Dorsolateral prefrontal cortex (tissue), 120 donors: ENCODE measurements at regions of chr3 and their contacts with region 1.

Region 1: GRCh38 chr3:195522254-195523023 is 20.7 kb downstream of the PPP1R2 start:
- DNase-seq: no peak
- H3K4me3 ChIP-seq: peak overlapping the region in 39 of 59 donors; percentile 3 to 48 (median 24)
- H3K27ac ChIP-seq: no peak overlapping the region
- H3K27me3 ChIP-seq: no peaks in the 10 kb centered on the region
- CTCF ChIP-seq: peak; percentile 73 to 99 (median 89)

Region 2: DNA sequence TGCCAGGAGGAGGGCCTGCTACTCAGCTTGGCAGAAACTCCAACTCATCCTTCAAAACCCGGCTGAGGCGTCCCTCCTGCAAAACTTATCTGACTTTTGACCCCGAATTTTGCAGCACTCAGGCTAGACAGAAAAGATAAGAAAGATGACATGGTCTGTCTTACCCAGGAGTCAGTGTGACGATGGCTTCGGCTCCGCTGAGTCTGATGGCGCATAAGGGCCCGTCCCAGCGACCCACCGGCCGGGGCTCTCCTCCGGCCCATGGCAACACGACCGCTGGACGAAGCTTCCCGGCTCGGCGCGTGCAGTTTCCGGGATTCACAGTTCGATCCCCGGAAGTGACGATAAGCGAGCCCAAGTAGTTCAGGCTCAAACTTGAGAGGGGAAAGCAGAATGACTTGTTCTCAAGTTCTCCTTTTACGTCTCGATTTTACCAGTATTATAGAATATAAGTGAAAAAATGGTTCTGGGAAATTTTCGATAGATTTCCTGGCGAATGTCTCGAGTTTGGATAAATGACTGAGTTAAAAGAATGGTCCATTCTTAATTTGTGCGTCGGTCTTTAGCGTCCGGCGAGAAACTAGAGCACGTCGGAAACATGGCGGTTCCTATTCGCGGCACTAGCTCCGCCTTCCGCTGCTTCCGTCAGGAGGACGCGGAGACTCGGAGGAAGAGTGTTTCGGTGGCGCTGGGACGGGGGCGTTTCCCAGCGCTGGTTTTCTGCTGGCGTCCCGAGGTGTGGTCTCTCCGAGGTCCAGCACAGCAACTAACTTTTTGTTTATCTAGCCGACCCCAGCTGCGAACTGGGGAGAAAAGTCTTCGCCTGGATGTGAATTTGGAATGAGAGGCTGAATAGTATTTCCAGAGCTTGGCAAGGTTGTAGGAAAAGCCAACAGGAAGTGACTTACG is 850.3 kb before region 1 on chr3 and contains the start of gene LSG1:
- intact Hi-C with region 1: loop called in 1 of 2 experiments (anchors 10 kb)
- DNase-seq: peak; percentile 84 to 91 (median 88)
- H3K4me3 ChIP-seq: peak within 1 kb of the TSS; percentile 63 to 100 (median 91)
- H3K27ac ChIP-seq: peak within 1 kb of the TSS; percentile 75 to 99 (median 93)
- H3K27me3 ChIP-seq: peaks cover 0 to 8% (median 0%) of the 10 kb centered on the region in 45 donors
- CTCF ChIP-seq: peak in 36 of 56 donors; percentile 2 to 62 (median 37)
- total RNA-seq, gene LSG1: 19.3 to 41.3 (median 27.1) TPM

Region 3: DNA sequence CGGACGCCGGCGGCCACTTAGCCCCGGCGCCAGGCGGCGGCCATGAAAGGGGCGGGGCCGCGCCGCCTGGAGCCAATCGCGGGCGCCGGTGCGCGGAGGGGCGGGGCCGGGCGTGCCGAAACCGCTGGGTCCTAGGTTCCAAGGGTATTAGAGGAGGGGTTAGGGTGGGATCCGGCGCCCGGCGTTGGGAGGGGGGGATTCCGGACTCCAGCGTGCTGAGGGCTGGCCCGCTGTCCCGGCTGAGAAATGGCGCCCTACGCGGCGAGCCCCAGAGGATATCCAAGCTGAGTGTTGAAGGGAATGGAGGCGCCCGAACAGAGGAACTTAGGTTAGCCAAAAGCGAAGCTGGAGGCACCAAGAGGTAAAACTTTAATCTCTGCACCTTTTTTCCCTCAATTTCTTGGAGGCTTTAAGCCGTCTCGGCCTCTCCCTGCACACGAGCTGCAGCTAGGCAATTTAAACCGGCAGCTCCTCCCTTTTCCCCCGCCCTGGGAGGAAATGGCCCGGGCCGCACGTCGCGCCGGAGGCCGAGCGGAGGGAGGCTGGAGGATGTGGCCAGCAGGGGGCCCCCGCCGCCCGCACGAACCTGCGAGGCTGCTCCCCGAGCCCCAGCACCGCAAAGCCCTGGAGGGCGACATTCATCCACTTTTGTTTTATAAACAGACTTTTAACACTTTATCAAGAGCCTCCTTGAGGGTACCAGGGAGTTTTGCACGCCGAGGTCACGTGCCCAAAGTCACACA is 251.2 kb before region 1 on chr3 and contains the start of gene XXYLT1:
- intact Hi-C with region 1: loop called (anchors 1 kb)
- DNase-seq: peak; percentile 81 to 94 (median 84)
- H3K4me3 ChIP-seq: peak within 1 kb of the TSS; percentile 72 to 98 (median 89)
- H3K27ac ChIP-seq: peak within 1 kb of the TSS; percentile 53 to 97 (median 91)
- H3K27me3 ChIP-seq: no peaks in the 10 kb centered on the region
- CTCF ChIP-seq: peak; percentile 81 to 99 (median 96)
- total RNA-seq, gene XXYLT1: 7.2 to 19.3 (median 13.0) TPM

Region 4: GRCh38 chr3:195508185-195508584 is 14.3 kb before region 1 on chr3:
- intact Hi-C with region 1: no loop called
- DNase-seq: no peak
- H3K4me3 ChIP-seq: no peak overlapping the region
- H3K27ac ChIP-seq: no peak overlapping the region
- H3K27me3 ChIP-seq: no peaks in the 10 kb centered on the region
- CTCF ChIP-seq: no peak

Region 5: GRCh38 chr3:195542698-195543499 is 20.5 kb after region 1 on chr3 and contains the start of gene PPP1R2:
- intact Hi-C with region 1: no loop called
- DNase-seq: peak; percentile 81 to 95 (median 92)
- H3K4me3 ChIP-seq: peak within 1 kb of the TSS; percentile 59 to 100 (median 88)
- H3K27ac ChIP-seq: peak within 1 kb of the TSS in 58 of 59 donors; percentile 19 to 92 (median 81)
- H3K27me3 ChIP-seq: no peaks in the 10 kb centered on the region
- CTCF ChIP-seq: peak in 23 of 56 donors; percentile 6 to 47 (median 24)
- total RNA-seq, gene PPP1R2: 25.2 to 68.8 (median 47.3) TPM